ENCODE measurements at regions of chr5 and their contacts with region 1.

Region 1: DNA sequence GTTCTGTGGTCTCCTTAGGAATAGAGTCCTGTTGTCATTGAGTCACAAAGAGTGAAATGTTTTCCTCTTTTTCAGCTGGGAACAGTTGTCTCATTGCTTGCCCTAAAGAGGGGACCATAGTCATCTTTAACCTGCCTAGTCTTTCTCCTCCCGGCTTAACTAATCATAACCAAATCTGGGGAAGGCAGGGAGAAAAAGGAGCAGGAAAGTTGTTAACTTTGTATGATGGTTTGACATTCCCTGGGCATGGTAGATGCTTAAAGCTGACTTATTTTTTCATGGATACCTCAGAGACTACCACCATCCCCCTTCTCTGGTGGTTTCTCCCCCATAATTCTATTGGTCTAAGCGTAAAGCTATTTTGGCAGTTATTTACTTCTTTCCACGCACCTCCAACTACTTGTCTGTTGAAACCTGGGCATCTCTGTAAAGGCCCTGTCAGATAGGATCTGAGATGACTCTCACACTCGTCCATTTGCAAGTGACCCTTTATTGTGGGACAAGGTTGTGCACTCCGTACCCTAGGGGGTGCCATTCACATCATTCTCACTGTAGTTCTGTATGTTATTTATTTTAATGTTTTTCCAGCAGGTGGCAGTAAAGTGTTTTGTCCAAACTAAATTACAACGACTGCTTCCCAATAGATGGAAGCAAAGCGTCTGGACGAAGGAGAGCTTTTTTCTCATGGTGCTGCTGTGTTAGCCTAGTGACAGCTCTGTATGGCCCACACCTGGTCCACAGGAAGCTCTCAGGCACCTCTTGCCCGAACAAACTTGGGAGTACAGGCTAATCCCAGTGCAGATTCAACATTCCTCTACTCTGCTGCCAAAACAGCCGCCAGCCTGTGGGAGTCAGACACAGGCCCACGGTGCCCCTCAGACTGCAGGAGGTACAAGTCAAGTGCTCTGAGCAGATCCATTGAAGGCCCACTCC is 3.0 kb upstream of the FAM13B start:
- DNase-seq: peak; percentile 59
- H3K4me3 ChIP-seq: no peak overlapping the region
- CTCF ChIP-seq: peak; percentile 61

Region 2: DNA sequence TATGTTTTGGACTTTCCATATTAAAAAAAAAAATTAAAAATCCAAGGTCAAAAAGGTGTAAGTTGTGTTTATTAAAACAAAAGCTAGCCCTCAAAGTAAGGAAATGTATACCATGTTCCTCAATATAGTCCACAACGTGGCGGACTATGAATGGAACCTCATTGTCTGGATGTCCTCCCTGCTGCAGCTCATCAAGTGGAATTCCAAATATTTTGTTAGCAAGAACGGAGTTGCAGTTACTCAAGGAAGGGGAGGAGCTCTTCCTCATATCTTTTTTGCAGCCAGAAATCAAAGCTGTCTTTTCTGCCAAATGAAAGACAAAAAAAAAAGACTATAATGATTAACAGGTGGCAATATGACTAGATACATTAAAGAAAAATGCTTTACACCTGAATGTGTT is 17.0 kb before region 1 on chr5:
- CTCF ChIA-PET with region 1: interaction called, 16 read pairs
- POLR2A ChIA-PET with region 1: no interaction called
- DNase-seq: no peak
- H3K4me3 ChIP-seq: no peak overlapping the region
- CTCF ChIP-seq: no peak

Region 3: GRCh38 chr5:138054847-138055558 is 19.1 kb after region 1 on chr5:
- CTCF ChIA-PET with region 1: interaction called, 444 read pairs
- POLR2A ChIA-PET with region 1: interaction called, 3 read pairs
- DNase-seq: no peak
- H3K4me3 ChIP-seq: no peak overlapping the region
- CTCF ChIP-seq: no peak

Region 4: DNA sequence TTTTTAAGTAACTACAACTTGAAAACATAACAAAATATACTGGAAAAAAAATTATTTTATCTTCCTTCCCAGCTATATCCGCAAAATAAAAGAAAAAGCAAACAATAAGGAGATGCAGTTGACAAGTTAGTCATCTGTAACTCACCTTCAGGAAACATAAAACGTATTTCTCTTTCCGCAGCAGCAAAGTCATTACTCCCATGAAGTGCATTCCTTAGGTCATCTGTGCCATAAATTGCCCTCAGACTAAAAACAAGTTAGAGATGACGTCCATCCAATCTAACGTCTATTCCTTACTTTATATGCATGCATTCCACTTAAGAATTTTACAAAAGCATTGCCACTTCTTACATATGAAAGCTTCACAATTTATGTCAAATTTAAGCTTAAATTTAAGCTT is 92.5 kb after region 1 on chr5:
- CTCF ChIA-PET with region 1: interaction called, 61 read pairs
- POLR2A ChIA-PET with region 1: no interaction called
- DNase-seq: no peak
- H3K4me3 ChIP-seq: no peak overlapping the region
- CTCF ChIP-seq: no peak

Region 5: DNA sequence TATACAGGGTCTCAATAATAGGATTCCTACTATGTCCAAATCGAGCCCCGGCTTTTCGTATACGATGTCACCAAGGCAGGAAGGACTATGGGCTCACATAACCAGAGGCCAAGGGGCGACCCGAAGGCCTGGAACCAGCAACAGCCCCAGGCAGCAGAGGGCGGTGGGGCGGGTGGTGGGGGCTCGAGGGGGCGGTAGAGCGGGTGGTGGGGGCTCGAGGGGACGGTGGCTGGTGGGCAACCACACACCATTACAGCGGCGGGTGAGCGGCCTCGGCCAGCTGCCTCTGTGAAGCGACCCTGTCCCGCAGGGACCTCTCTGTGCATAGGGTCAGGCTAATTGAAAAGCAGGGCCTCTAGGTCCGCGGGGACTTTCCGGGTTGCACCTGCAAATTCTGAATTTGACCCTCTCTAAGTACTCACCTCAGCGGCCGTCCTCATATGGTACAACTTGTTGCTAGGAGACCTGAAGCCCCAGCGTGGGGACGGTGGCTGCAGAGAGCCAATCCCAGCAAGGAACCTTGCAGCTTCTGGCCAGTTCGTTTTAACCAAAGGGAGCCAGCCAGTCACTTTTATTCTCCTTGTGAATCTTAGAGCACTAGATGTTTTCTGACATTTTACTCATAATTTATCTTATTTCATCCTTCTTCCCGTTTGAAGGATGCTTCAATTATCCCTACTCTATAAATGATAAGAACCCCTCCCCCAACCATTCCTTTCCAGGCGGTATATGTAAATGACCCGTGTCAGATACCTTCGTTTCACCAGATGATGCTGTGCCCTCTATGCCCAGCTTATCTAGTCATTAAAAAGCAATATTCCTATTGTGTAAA is 103.3 kb after region 1 on chr5 and contains the start of gene NME5:
- CTCF ChIA-PET with region 1: interaction called, 61 read pairs
- POLR2A ChIA-PET with region 1: no interaction called
- DNase-seq: no peak
- H3K4me3 ChIP-seq: peak within 1 kb of the TSS; percentile 49
- CTCF ChIP-seq: no peak